H1 (cell line): ENCODE measurements at regions of chr2 and their contacts with region 1.

Region 1: DNA sequence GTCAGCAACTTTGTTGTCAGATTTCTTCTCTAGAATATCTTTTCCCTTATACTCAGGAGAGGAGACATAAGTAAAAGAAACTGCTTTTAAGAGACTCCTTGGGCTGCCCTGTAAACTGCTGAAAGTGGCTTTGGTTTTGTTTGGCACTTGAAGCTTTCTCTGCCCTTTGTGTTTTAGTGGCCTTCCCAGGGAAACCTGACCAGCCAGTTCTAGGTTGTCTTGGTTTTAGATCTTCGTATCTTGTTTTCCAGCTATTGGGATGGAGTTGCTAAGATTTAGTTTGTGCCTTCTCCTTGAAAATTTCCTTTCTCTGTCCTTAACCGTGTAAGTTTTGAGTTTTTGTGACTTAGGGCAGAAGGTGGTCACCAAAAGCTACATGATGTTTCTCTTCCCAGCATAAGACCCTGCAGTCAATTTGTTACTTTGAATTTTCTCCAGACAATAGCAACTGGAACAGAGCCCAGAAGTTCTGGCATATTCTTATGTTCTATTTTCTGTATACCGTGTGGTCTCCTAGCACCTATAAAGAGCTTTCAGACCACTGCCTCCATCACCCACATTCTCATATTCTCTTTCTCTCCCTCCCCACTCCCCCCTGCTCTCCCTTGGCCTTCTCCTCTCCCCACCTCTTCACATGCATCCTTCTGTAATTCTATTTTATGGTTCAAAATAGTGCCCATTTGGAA is 81.1 kb downstream of the BOLA3 start:
- DNase-seq: no peak
- H3K4me3 ChIP-seq: no peak overlapping the region
- H3K27ac ChIP-seq: no peak overlapping the region
- H3K4me1 ChIP-seq: peaks cover 0 to 2% (median 0%) of the 10 kb centered on the region in 4 experiments; a peak in 1 of 7 replicates
- H3K27me3 ChIP-seq: no peaks in the 10 kb centered on the region
- CTCF ChIP-seq: no peak
- EP300 ChIP-seq: no peak
- POLR2A ChIP-seq: no peak
- RAD21 ChIP-seq: no peak

Region 2: GRCh38 chr2:74080346-74080745 is 13.7 kb after region 1 on chr2:
- CTCF ChIA-PET with region 1: interaction called, 10 read pairs
- POLR2A ChIA-PET with region 1: interaction called, 3 read pairs
- DNase-seq: no peak
- H3K4me3 ChIP-seq: no peak overlapping the region
- H3K27ac ChIP-seq: no peak overlapping the region
- H3K4me1 ChIP-seq: no peaks in the 10 kb centered on the region
- H3K27me3 ChIP-seq: no peaks in the 10 kb centered on the region
- CTCF ChIP-seq: peak; percentile 11 to 53 (median 48)
- EP300 ChIP-seq: no peak
- POLR2A ChIP-seq: no peak
- RAD21 ChIP-seq: peak; percentile 72 to 84

Region 3: GRCh38 chr2:74198461-74199274 is 132.0 kb after region 1 on chr2 and contains the start of gene MTHFD2:
- CTCF ChIA-PET with region 1: no interaction called
- POLR2A ChIA-PET with region 1: no interaction called
- DNase-seq: peak; percentile 94 to 95
- H3K4me3 ChIP-seq: peak within 1 kb of the TSS; percentile 85 to 98 (median 89)
- H3K27ac ChIP-seq: peak within 1 kb of the TSS; percentile 97
- H3K4me1 ChIP-seq: peaks cover 0 to 8% (median 3%) of the 10 kb centered on the region in 4 experiments; a peak in 2 of 7 replicates
- H3K27me3 ChIP-seq: no peaks in the 10 kb centered on the region
- CTCF ChIP-seq: peak; percentile 56 to 81 (median 76)
- EP300 ChIP-seq: peak in 1 of 2 experiments; percentile 66; a peak in 1 of 3 replicates
- POLR2A ChIP-seq: peak; percentile 98
- RAD21 ChIP-seq: peak; percentile 26 to 45
- total RNA-seq, gene MTHFD2: 260 and 291 TPM in 2 replicates